ENCODE measurements at regions of chr4 and their contacts with region 1.

Region 1: DNA sequence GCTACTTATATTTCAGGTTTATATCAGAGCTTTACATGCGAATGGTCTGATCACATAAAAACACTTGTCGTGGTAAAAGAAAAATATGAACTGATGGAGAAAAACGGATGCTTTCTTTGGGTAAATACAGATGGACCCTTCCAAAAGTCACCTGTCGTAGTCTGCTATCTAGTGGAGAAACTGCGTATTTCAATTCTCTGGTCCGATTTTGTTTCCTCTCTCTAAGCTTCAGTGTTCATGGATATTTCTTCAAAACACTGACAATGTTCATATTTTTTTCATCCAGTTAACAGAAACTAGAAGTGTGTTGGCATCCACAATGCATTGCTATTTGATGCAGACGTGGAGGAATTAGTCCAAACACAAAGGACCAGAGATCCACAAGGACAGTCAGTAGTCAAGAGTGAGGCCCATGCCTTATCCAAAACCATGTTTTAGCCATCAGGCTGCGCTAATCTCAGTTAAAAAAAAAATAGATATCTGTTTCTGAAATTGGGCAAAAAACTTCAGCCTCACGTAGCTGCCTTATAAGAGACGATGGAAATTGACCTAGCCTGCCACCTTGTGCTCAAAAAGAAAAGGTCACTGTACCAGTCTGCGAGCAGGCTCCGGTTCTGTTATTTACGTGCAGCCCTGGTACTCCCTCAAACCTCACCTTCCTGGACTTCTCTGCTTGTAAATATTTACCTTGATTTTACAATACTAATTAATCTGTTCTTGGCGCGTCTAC is 16.0 kb downstream of the MEPE start:
- DNase-seq: peak in 1 of 2 donors; percentile 35
- H3K4me3 ChIP-seq: no peak overlapping the region
- CTCF ChIP-seq: no peak
- POLR2A ChIP-seq: no peak

Region 2: GRCh38 chr4:87260477-87260876 is 588.3 kb before region 1 on chr4:
- intact Hi-C with region 1: loop called (anchors 10 kb)
- DNase-seq: no peak
- H3K4me3 ChIP-seq: no peak overlapping the region
- CTCF ChIP-seq: no peak
- POLR2A ChIP-seq: no peak

Region 3: GRCh38 chr4:87388901-87389300 is 459.9 kb before region 1 on chr4:
- intact Hi-C with region 1: loop called (anchors 10 kb)
- DNase-seq: no peak
- H3K4me3 ChIP-seq: no peak overlapping the region
- CTCF ChIP-seq: no peak
- POLR2A ChIP-seq: no peak

Region 4: GRCh38 chr4:87973283-87974169 is 124.7 kb after region 1 on chr4:
- intact Hi-C with region 1: loop called (anchors 10 kb)
- DNase-seq: no peak
- H3K4me3 ChIP-seq: no peak overlapping the region
- CTCF ChIP-seq: no peak
- POLR2A ChIP-seq: no peak

Region 5: GRCh38 chr4:88211473-88212252 is 362.9 kb after region 1 on chr4:
- intact Hi-C with region 1: loop called (anchors 10 kb)
- DNase-seq: peak in 1 of 2 donors; percentile 53
- H3K4me3 ChIP-seq: no peak overlapping the region
- CTCF ChIP-seq: peak in 1 of 3 donors; percentile 25
- POLR2A ChIP-seq: no peak

Region 6: DNA sequence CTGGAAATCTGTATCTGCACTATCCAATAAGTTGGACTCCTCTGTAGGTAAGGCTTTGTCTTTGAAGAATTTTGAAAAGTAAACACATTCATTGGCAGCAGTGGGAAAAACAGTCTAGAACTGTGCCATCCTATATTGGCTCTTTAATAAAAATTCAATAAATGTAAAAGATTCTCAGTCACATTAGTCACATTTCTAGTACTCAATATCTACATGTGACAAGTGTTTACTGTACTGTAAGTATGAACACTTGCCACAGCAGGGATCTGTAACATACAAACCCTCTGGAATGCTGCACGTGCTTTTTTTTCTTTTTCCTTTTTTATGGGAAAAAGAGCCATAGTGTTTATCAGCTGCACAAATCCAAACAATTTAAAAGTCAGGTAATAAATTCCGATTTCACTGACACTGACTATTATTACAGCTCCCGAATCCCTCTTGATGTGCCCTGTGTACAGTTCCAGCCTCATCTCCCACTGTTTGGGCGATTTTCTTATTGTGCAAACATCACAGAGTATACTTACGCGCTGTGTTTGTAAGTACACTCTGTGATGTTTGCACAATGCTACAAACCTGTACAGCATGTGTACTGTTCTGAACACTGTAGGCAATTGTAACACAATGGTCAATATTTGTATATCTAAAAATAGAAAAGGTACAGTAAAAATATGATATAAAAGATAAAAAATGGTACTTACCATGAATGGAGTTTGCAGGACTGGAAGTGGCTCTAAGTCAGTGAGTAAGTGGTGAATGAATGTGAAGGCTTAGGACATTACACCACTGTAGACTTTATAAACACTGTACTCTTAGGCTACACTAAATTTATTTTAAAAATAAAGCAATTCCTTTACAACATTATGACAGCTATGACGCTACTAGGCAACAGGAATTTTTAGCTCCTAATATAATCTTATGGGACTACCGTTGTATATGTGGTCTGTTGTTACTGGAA is 666.0 kb after region 1 on chr4:
- intact Hi-C with region 1: loop called (anchors 10 kb)
- DNase-seq: no peak
- H3K4me3 ChIP-seq: no peak overlapping the region
- CTCF ChIP-seq: no peak
- POLR2A ChIP-seq: no peak